MCF 10A (cell line): ENCODE measurements at regions of chr15 and their contacts with region 1.

Region 1: GRCh38 chr15:49155110-49155833 is at the start of gene COPS2:
- DNase-seq: peak; percentile 98
- H3K4me3 Mint-ChIP-seq: peak within 1 kb of the TSS; percentile 98
- H3K27ac Mint-ChIP-seq: peak within 1 kb of the TSS; percentile 94
- H3K4me1 Mint-ChIP-seq: peaks cover 29% of the 10 kb centered on the region
- H3K27me3 Mint-ChIP-seq: no peaks in the 10 kb centered on the region
- CTCF ChIP-seq: no peak
- total RNA-seq, gene COPS2: 123 and 132 TPM in 2 replicates

Region 2: GRCh38 chr15:49036650-49037545 is 118.4 kb before region 1 on chr15:
- CTCF ChIA-PET with region 1: interaction called, 3 read pairs
- POLR2A ChIA-PET with region 1: interaction called, 10 read pairs
- intact Hi-C with region 1: no loop called
- DNase-seq: no peak
- H3K4me3 Mint-ChIP-seq: no peak overlapping the region
- H3K27ac Mint-ChIP-seq: no peak overlapping the region
- H3K4me1 Mint-ChIP-seq: peaks cover 13% of the 10 kb centered on the region
- H3K27me3 Mint-ChIP-seq: no peaks in the 10 kb centered on the region
- CTCF ChIP-seq: no peak

Region 3: GRCh38 chr15:49046220-49047102 is 108.8 kb before region 1 on chr15 and contains the start of gene SECISBP2L:
- CTCF ChIA-PET with region 1: no interaction called
- POLR2A ChIA-PET with region 1: interaction called, 22 read pairs
- intact Hi-C with region 1: loop called (anchors 1 kb)
- DNase-seq: peak; percentile 95
- H3K4me3 Mint-ChIP-seq: peak within 1 kb of the TSS; percentile 94
- H3K27ac Mint-ChIP-seq: peak within 1 kb of the TSS; percentile 94
- H3K4me1 Mint-ChIP-seq: peaks cover 9% of the 10 kb centered on the region
- H3K27me3 Mint-ChIP-seq: no peaks in the 10 kb centered on the region
- CTCF ChIP-seq: peak; percentile 11
- total RNA-seq, gene SECISBP2L: 19.6 and 32.3 TPM in 2 replicates

Region 4: DNA sequence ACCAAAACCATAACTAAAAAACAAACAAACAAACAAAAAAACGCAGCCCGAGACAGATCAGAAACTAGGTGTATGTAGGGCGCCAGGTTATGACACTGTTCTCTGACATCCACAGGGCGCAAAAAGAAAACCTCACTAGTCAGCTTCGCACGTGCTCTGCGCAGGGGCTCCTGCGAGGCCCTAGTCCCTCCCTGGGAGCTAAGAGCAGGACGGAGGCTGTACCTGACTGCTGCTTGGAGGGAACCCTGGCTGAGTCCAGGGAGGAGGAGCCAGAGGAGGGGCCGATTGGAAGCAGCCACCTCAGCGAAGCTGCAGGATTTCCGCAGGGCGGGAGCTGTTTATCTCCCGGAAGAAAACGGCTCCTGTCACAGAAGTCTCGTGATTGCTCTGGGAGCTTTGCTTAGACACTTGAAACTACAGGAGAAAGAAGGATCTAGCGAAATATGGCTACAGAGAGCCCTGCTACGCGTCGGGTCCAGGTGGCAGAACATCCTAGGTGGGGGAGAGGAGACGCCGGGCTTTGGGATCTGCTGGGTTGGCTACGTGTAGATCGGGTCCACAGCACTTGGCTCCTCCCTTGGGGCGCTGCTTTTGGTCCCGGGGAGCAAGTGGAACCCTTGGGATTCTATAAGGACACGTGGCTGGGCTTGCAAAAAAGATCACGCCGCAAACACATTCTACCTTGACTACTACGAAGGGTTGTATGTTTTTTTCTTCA is 14.8 kb after region 1 on chr15 and contains the start of gene GALK2:
- CTCF ChIA-PET with region 1: interaction called, 3 read pairs
- POLR2A ChIA-PET with region 1: interaction called, 140 read pairs
- intact Hi-C with region 1: no loop called
- DNase-seq: peak; percentile 95
- H3K4me3 Mint-ChIP-seq: peak within 1 kb of the TSS; percentile 96
- H3K27ac Mint-ChIP-seq: peak within 1 kb of the TSS; percentile 99
- H3K4me1 Mint-ChIP-seq: no peaks in the 10 kb centered on the region
- H3K27me3 Mint-ChIP-seq: no peaks in the 10 kb centered on the region
- CTCF ChIP-seq: no peak
- total RNA-seq, gene GALK2: 41.6 and 43.5 TPM in 2 replicates